ENCODE measurements at regions of chr17 and their contacts with region 1.

Region 1: GRCh38 chr17:38349097-38349730 is 2.4 kb upstream of the SOCS7 start:
- DNase-seq: peak; percentile 90 to 94
- H3K4me3 ChIP-seq: no peak overlapping the region
- H3K27ac ChIP-seq: peak overlapping the region in 1 of 5 donors; percentile 52
- H3K4me1 ChIP-seq: peaks cover 11 to 32% (median 25%) of the 10 kb centered on the region in 4 donors
- H3K27me3 ChIP-seq: no peaks in the 10 kb centered on the region
- CTCF ChIP-seq: peak in 5 of 7 experiments; percentile 72 to 85 (median 78)
- EP300 ChIP-seq: no peak
- POLR2A ChIP-seq: no peak

Region 2: GRCh38 chr17:38415250-38416194 is 66.3 kb after region 1 on chr17:
- intact Hi-C with region 1: loop called (anchors 5 kb)
- DNase-seq: peak in 1 of 2 donors; percentile 78
- H3K4me3 ChIP-seq: no peak overlapping the region
- H3K27ac ChIP-seq: no peak overlapping the region
- H3K4me1 ChIP-seq: peaks cover 17 to 36% (median 30%) of the 10 kb centered on the region in 4 donors
- H3K27me3 ChIP-seq: peaks cover 0 to 50% (median 37%) of the 10 kb centered on the region in 3 donors
- CTCF ChIP-seq: no peak
- EP300 ChIP-seq: no peak
- POLR2A ChIP-seq: no peak